ENCODE measurements at regions of chr15 and their contacts with region 1.

Region 1: GRCh38 chr15:25764980-25765735 is 98.0 kb downstream of the ATP10A start:
- DNase-seq: no peak
- ATAC-seq: no peak

Region 2: DNA sequence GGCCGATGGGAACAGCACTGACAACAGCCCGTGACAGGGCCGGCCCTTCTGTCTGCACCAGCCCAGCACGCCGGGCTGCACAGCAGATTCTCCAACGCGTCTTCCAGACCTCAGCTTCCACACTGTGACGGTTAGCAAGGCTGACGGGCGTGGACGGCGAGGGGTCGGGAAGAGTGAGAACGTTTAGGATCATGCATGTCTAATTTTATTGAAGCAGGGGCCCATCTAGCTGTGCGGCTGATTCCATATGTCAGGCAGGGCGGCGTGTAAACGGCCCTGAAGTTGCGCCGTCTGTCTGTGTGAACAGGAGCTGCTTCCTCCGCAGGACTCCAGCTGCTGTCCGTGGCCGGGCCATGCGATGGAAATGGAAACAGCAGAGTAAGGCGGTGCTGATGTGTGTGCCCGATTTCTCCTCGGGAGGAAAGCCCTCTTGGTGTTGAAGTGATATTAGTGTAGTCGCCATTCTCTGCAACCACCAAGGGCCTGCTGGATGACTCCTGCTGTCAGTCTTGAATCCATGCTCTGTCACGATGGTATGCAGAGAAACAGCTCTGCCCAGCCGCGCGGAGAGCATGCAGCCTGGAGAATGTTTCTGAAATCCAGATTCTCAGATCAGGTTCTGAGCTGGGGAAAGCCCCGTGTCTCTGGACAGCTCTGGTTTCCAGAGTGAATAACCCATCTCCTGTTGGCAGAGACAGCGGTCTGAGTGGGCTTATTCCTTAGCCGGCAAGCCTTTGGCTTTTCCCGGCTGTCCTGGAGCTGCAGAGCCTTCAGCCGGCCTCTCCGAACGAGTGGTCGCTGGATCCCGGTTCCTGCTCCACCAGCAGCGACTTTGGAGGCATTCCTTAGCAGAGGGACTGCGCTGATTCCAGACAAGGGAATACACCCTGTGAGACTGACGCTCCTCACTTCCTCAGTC is 168.3 kb before region 1 on chr15:
- intact Hi-C with region 1: no loop called
- DNase-seq: no peak
- ATAC-seq: peak; percentile 34

Region 3: DNA sequence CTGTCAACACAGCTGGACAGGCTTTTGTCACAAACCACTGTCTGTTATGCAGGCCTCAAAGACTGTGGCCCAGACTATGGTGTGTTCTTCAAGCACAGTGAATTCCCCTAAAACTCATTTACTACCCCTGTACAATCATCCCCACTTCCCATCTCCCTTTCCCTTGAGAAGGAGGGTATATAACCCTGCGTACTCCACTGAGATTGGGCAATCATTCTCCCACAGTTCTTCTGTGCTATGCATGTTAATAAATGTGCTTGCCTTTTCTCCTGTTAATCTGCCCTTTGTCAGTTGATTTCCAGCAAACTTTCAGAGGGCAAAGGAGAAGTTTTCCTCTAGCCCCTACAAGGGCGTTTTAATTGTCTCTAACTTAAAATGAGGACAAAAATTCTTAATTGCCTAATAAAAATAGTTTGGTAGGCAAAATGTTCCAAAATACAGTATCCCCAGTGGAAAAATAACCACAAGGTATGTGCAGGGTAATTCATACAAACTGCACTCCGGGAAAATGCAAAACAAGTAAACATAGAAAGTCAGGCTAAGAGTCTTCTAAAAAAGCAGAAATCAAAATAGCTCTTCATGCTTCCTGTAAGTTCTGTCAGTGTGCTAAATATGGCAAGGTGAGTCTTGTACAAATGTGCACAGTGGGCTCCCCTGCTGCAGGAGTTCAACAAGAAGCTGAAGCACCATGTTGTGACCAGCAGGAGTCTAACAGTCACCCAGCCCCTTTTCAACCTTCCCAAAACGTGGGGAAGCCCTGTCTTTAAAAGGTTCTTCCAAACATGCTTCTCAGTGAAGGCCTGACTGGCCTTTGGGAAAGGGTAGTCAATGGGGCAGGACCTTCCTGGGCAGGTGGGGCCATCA is 87.7 kb after region 1 on chr15:
- intact Hi-C with region 1: loop called (anchors 1 kb)
- DNase-seq: no peak
- ATAC-seq: no peak

Measured in sciatic nerve (tissue), 2 donors.